Sciatic nerve (tissue), 2 donors: ENCODE measurements at regions of chr19 and their contacts with region 1.

Region 1: DNA sequence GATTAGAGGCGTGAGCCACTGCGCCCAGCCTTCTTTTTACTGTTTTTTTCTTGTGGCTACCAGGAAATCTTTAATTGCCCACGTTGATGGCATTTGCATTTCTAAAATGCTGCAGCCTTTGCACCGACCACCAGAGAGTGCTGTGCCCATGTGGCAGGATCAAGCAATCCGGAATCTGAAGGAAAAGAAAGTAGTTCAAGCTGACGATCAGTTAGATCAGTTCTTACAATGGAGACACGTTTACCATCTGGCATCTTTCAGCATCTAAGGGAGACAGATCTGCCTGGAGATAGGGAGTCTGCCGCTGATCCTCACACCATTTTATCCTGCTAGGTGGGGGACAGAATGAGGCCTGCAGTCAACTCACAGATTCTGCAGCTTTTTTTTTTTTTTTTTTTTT is 19.9 kb downstream of the TINCR start:
- DNase-seq: no peak
- ATAC-seq: no peak

Region 2: GRCh38 chr19:5466072-5466471 is 81.8 kb before region 1 on chr19:
- intact Hi-C with region 1: no loop called
- DNase-seq: no peak
- ATAC-seq: no peak

Region 3: DNA sequence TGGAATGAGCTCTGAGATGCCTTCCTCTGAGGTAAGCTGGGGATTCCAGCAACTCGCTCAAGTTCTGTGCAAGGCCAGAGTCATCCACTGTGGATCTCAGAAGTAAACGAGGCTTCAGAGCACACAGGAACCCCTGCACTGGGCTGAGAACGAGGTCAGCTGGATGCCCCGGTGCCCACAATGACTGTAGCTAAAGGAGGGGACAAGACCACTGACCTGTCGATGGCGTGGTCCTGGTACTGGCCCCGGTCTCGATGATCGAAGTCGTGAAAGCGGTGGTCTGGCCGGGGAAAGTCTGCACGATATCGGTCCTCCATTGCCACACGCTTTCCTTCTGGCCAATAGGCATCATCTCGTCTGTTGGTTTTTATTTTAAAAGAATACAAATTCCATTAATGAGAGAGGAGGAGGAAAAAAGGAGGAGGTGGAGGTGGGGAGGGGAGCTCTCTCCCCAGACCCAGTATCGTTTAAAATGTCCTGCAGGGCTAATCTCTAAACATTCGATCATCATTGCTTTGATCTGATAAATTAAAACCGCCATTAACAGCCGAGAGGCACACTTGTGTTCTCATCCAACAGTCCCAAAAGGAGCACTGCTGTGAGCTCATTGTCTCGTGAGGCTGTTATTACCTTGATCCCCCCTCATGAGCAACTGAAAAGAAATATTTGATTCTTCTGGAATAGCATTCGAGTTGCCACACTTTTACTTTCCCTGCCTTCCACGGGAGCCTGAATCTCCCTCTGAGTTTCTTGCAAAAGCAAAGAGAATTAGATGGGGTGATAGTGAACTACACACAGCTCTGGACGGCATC is 44.9 kb after region 1 on chr19:
- intact Hi-C with region 1: loop called (anchors 1 kb)
- DNase-seq: no peak
- ATAC-seq: no peak